ENCODE measurements at regions of chr20 and their contacts with region 1.

Region 1: DNA sequence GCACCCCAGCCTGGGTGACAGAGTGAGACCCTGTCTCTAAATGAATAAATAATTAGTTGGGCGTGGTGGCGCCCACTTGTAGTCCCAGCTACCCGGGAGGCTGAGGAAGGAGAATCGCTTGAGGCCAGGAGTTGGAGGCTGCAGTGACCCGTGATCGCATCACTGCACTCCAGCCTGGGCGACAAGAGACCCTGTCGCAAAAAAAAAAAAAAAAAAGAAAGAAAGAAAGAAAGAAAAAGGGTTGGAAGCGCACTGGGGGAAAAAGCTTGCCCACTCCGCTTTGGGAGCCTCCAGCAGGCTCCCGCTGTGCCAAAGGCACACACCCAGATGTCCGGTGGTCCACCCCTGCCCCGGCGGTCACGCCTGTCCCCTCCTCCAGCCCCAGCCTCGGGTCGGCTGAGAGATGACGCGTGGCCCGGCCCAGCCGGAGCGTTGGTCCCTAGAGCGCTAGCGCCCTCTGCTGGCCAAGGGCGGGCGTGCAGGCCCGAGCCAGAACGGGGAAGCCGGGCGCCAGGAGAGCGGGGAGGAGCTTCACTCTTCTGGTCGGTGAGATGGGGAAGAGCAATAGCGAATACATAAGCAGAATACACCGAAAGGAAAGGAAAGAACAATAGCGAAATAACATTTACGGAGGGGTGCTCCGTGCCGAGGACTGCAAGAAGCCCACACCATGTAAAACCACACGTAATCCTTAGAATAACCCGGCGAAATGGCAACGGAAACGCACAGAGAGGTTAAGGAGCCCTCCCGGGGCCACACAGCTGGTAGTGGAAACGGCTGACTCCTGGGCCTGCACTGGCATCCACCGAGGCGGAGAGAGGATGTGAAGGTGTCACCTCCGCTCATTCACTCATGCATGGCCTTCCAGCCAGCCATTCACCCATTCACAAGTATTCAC is 41.7 kb downstream of the UBE2V1 start:
- DNase-seq: peak; percentile 81 to 88
- ATAC-seq: peak; percentile 96 to 97
- H3K4me3 ChIP-seq: peak overlapping the region; percentile 38
- H3K27ac ChIP-seq: peak overlapping the region; percentile 81 to 89
- H3K4me1 ChIP-seq: peaks cover 19% of the 10 kb centered on the region; the same call in 2 of the 3 replicates
- CTCF ChIP-seq: peak; percentile 98
- EP300 ChIP-seq: no peak
- POLR2A ChIP-seq: no peak
- RAD21 ChIP-seq: peak; percentile 99 to 100

Region 2: DNA sequence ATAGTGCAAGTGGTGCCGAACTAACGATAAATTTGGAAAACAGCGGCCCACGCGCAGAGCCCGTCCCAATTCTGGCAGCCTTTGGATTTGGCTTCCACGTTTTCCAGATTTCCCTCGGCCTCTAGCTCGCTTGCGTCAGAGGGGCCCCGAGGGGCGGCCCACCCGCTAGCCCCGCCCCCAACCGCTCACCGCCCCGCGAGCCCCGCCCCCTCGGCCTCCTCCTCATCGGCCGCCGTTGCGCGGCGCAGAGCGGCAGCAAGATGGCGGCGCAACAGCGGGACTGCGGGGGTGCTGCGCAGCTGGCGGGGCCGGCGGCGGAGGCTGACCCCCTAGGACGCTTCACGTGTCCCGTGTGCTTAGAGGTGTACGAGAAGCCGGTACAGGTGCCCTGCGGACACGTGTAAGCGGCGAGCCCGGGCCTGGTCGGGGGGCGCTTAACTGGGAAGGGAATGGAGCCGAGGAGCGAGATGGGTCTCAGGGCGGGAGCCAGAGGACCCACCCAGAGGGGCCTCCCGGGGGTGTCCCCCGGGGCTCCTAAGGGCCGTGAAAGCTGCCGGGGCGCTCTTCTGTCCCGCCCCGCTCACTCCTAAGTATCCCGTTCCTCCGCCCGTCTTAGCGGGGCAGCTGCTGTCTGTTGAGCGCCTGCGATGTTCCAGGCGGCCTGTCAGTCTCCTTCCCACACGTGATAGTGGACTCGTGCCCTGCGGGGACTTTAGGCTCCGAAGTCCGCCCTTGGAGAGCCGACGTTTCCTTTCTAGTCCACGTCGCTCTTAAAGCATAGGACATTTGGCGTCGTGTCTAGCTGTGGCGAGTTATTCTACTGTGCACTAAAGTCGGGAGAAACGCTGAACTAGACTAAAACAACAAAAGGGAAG is 134.8 kb before region 1 on chr20 and contains the start of gene RNF114:
- CTCF ChIA-PET with region 1: interaction called, 10 read pairs
- POLR2A ChIA-PET with region 1: interaction called, 4 read pairs
- DNase-seq: peak; percentile 72 to 90
- ATAC-seq: peak; percentile 90 to 91
- H3K4me3 ChIP-seq: peak within 1 kb of the TSS; percentile 71
- H3K27ac ChIP-seq: peak within 1 kb of the TSS; percentile 79 to 95
- H3K4me1 ChIP-seq: peaks cover 20% of the 10 kb centered on the region
- CTCF ChIP-seq: no peak
- EP300 ChIP-seq: 0 out of 5 replicates have a peak, but pooled peaks of 1 of the 2 experiments have one; percentile 8
- POLR2A ChIP-seq: peak; percentile 92
- RAD21 ChIP-seq: no peak
- polyA plus RNA-seq, gene RNF114: 44.8 and 67.8 TPM in 2 replicates

Region 3: DNA sequence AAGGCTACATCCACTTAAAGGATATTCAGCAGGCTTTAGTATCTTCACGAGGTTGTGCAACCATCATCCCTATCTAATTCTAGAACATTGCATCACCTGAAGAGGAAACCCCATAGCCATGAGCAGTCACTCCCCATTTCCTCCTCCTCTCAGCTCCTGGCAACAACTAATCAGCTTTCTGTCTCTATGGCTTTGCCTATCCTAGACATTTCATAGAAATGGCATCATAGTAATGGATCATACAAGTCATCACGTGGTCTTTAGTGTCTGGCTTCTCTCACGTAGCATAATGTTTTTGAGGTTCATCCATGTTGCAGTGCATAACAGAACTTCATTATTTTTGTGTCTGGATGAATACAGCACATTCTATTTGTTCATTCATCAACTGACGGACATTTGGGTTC is 68.0 kb before region 1 on chr20:
- CTCF ChIA-PET with region 1: interaction called, 43 read pairs
- POLR2A ChIA-PET with region 1: no interaction called
- DNase-seq: peak in 1 of 2 experiments; percentile 42
- ATAC-seq: peak; percentile 39 to 45; a peak in 2 of 6 replicates
- H3K4me3 ChIP-seq: no peak overlapping the region
- H3K27ac ChIP-seq: peak overlapping the region in 1 of 2 experiments; percentile 15; a peak in 1 of 6 replicates
- H3K4me1 ChIP-seq: peaks cover 20% of the 10 kb centered on the region
- CTCF ChIP-seq: no peak
- EP300 ChIP-seq: no peak
- POLR2A ChIP-seq: no peak
- RAD21 ChIP-seq: no peak

Region 4: GRCh38 chr20:50034567-50035208 is 36.6 kb before region 1 on chr20:
- CTCF ChIA-PET with region 1: interaction called, 66 read pairs
- POLR2A ChIA-PET with region 1: interaction called, 4 read pairs
- DNase-seq: peak; percentile 78 to 86
- ATAC-seq: peak; percentile 54 to 71
- H3K4me3 ChIP-seq: no peak overlapping the region
- H3K27ac ChIP-seq: peak overlapping the region; percentile 93 to 95
- H3K4me1 ChIP-seq: peaks cover 62% of the 10 kb centered on the region
- CTCF ChIP-seq: no peak
- EP300 ChIP-seq: no peak
- POLR2A ChIP-seq: no peak
- RAD21 ChIP-seq: no peak

Region 5: GRCh38 chr20:50054626-50055511 is 16.4 kb before region 1 on chr20:
- CTCF ChIA-PET with region 1: interaction called, 45 read pairs
- POLR2A ChIA-PET with region 1: no interaction called
- DNase-seq: no peak
- ATAC-seq: peak in 1 of 2 experiments; percentile 19; a peak in 1 of 6 replicates
- H3K4me3 ChIP-seq: no peak overlapping the region
- H3K27ac ChIP-seq: peak overlapping the region in 1 of 2 experiments; percentile 31; a peak in 1 of 6 replicates
- H3K4me1 ChIP-seq: no peaks in the 10 kb centered on the region
- CTCF ChIP-seq: no peak
- EP300 ChIP-seq: no peak
- POLR2A ChIP-seq: no peak
- RAD21 ChIP-seq: no peak

Region 6: DNA sequence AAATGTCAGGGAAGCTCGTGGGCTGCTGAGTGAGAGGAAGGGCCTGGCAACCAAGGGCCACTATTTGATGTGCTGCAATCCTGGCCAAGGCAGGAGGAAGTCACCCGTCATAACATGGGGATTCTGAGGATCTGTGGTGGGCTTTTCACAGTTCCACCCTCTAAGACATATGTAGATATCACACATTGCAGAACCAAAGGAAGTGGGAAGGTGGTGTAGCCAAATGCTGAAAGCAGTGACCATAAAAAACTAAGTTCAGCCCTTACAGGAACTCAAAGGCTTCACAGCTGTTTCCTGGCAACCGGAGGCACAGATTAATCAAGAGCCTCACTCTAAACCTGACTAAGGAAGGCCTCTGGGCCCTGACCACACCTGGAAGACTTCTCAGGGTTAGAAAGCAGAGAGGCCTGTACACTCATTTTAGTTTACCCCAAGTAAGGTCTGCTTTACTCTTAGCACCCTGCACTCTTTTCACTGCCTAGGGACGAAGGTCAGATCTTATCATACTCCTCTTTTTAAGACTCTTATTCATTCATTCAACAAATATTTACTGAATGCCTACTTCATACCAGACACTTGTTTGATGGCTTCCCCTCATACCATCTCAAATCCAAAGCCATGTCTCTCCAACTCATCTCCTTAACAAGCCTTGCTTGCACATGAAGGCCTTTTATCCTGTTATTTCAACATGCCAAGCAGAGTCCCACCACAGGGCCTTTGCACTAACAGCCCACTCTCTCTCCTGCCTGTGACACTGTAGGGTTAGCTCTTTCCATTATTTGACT is 39.1 kb after region 1 on chr20:
- CTCF ChIA-PET with region 1: interaction called, 19 read pairs
- POLR2A ChIA-PET with region 1: interaction called, 4 read pairs
- DNase-seq: peak in 1 of 2 experiments; percentile 31
- ATAC-seq: peak in 1 of 2 experiments; percentile 3; a peak in 2 of 6 replicates
- H3K4me3 ChIP-seq: no peak overlapping the region
- H3K27ac ChIP-seq: peak overlapping the region; percentile 5 to 94; a peak in 4 of 6 replicates
- H3K4me1 ChIP-seq: peaks cover 67% of the 10 kb centered on the region
- CTCF ChIP-seq: no peak
- EP300 ChIP-seq: no peak
- POLR2A ChIP-seq: no peak
- RAD21 ChIP-seq: no peak

Region 7: DNA sequence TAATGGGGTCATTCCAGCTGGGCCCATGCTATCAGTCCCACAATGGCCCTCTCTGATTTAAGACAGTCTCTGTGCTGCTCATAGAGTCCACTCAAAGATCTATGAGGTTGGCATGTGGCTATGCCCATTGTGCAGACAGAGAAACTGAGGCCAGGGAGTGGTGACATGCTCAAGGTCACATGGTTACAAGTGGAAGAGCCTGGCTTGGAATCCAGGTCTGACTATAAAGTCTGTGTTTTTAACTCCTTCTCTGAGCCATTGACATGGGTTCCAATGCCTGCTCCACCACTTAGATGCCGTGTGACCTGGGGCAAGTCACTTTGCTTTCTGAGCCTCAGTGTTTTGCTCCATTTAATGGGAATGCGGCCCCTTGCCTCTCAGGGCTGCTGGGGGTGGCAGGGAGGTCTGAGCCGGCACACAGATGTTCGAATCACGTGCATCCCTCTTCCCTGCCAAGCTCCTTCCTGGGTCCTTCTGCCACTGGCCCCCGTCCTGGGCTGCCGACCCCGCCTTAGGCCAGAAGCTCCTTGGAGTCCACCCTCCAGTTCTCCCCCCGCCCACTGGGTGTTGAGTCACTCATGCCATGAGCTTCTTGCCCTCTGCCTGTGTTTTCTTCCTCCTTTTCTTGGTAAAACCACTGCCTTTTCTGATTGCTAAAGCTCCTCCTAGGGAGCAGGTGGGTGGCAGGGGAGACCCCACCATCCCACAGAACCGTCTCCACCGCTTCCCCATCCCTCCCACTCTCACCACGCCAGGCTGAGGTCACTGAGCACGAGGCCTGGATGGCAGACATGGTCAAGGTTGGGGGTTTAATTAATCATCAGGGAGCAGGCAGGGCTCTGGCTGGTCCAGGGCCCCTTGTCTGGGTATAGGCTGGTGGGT is 155.1 kb after region 1 on chr20:
- CTCF ChIA-PET with region 1: no interaction called
- POLR2A ChIA-PET with region 1: no interaction called
- DNase-seq: no peak
- ATAC-seq: peak in 1 of 2 experiments; percentile 48; a peak in 3 of 6 replicates
- H3K4me3 ChIP-seq: no peak overlapping the region
- H3K27ac ChIP-seq: peak overlapping the region; percentile 69 to 80
- H3K4me1 ChIP-seq: peaks cover 15% of the 10 kb centered on the region
- CTCF ChIP-seq: no peak
- EP300 ChIP-seq: no peak
- POLR2A ChIP-seq: no peak
- RAD21 ChIP-seq: no peak